Heart left ventricle (tissue), 16 donors: ENCODE measurements at regions of chr10 and their contacts with region 1.

Region 1: DNA sequence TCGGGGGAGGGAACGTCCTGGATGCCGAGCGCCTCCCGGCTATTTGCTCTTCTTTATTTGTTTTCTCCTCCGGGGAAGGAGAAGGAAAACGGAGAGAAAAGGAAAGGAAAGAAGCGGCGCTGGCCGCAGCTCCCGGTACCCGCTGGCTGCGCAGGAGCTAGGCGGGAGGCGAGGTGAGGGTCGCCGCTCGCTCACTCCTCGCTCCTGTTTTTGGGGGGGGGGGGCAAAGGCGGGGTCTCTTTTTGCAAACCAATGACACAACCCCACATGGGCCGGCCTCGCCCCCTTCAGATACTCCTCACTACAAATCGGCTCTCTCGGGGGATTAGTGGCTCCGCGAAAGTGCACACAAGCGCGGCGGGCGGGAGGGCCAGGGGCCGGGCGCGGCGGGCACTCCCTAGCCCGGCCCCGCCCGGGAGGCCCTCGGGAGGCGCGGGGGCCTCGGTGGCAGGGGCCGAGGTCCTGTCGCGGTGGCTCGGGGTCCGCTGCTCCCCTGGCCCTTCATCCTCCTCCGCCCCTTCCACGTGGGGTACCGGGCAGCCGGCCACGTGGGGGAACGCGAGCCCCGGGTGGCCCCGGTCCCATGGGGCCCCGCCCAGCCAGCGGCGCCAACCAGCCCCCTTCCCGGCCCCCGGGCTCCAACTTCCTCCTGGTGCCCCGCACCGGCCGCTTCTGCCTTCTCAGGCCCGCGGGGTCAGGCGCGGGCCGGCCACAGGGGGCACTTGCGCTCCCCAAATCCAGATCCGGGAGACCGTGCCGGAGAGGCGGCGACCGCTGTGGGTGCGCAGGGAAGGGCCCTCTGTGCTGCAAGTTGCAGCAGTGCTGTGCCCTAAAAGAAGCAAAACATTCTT is 718 bp upstream of the CTBP2 start:
- DNase-seq: peak; percentile 81 to 89 (median 83)
- ATAC-seq: peak; percentile 56 to 78 (median 74)
- H3K4me3 ChIP-seq: peak overlapping the region; percentile 72 to 98 (median 90)
- H3K27ac ChIP-seq: peak overlapping the region; percentile 89 to 99 (median 98)
- H3K4me1 ChIP-seq: peaks cover 3 to 35% (median 25%) of the 10 kb centered on the region in 12 donors
- H3K27me3 ChIP-seq: no peaks in the 10 kb centered on the region
- CTCF ChIP-seq: peak; percentile 28 to 65 (median 52)
- POLR2A ChIP-seq: peak in 1 of 2 donors; percentile 51

Region 2: DNA sequence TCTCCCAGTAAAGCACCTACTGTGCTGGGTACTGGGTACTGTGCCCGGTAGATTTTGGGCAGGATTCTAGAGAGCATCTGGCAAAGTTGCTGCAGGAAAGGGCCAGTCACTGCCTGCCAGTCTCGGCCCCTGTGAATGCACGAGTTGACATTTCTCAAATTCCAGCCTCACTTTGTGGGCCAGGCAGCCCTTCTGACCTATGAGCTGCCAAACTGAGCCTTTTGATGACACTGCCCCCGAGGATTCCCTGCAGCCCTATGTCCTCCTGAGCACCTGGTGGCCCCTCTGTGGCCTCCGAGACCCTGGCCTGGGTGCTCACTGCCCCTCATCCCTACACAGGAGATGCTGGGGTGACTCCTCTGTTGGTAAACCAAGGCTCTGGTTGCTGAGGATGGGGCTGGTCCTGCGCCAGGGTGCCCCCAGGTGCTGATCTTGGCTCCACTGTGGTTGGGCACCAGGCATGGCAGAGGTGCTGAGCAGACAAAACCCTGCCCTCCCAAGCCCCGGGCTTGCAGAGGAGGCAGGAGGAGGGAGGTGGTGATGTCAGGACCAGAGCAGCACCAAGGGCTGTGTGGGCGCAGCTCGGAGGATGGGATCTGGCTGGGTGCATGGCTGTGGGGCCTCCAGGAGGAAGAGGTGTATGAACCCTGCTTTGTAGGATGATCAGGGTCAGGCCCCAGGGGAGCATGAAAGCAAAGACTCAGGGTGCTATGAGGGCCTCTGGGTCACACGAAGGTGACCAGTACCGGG is 683.3 kb before region 1 on chr10:
- intact Hi-C with region 1: no loop called
- DNase-seq: no peak
- ATAC-seq: peak in 2 of 4 donors; percentile 16 to 49
- H3K4me3 ChIP-seq: no peak overlapping the region
- H3K27ac ChIP-seq: no peak overlapping the region
- H3K4me1 ChIP-seq: peaks cover 0 to 4% (median 0%) of the 10 kb centered on the region in 12 donors
- H3K27me3 ChIP-seq: no peaks in the 10 kb centered on the region
- CTCF ChIP-seq: no peak
- POLR2A ChIP-seq: no peak

Region 3: GRCh38 chr10:124992462-124993344 is 168.4 kb before region 1 on chr10:
- intact Hi-C with region 1: loop called in 4 of 10 experiments (anchors 5 to 10 kb)
- DNase-seq: peak in 4 of 5 donors; percentile 76 to 84 (median 82)
- ATAC-seq: peak; percentile 68 to 73 (median 71)
- H3K4me3 ChIP-seq: no peak overlapping the region
- H3K27ac ChIP-seq: peak overlapping the region in 4 of 12 donors; percentile 1 to 22 (median 14)
- H3K4me1 ChIP-seq: peaks cover 0 to 21% (median 5%) of the 10 kb centered on the region in 12 donors
- H3K27me3 ChIP-seq: no peaks in the 10 kb centered on the region
- CTCF ChIP-seq: peak; percentile 62 to 84 (median 81)
- POLR2A ChIP-seq: no peak

Region 4: GRCh38 chr10:125060826-125061556 is 100.1 kb before region 1 on chr10:
- intact Hi-C with region 1: loop called in 9 of 10 experiments (anchors 1 to 10 kb)
- DNase-seq: peak; percentile 84 to 91 (median 87)
- ATAC-seq: peak; percentile 39 to 71 (median 67)
- H3K4me3 ChIP-seq: peak overlapping the region in 8 of 12 donors; percentile 12 to 38 (median 25)
- H3K27ac ChIP-seq: peak overlapping the region; percentile 19 to 90 (median 70)
- H3K4me1 ChIP-seq: peaks cover 27 to 100% (median 98%) of the 10 kb centered on the region in 12 donors
- H3K27me3 ChIP-seq: no peaks in the 10 kb centered on the region
- CTCF ChIP-seq: peak; percentile 77 to 95 (median 88)
- POLR2A ChIP-seq: no peak

Region 5: GRCh38 chr10:125084191-125084613 is 76.9 kb before region 1 on chr10:
- intact Hi-C with region 1: loop called in 2 of 10 experiments (anchors 5 kb)
- DNase-seq: peak in 3 of 5 donors; percentile 49 to 84 (median 56)
- ATAC-seq: peak; percentile 40 to 86 (median 76)
- H3K4me3 ChIP-seq: peak overlapping the region in 2 of 12 donors; percentile 6 to 34
- H3K27ac ChIP-seq: peak overlapping the region; percentile 62 to 92 (median 82)
- H3K4me1 ChIP-seq: peaks cover 3 to 73% (median 45%) of the 10 kb centered on the region in 12 donors
- H3K27me3 ChIP-seq: no peaks in the 10 kb centered on the region
- CTCF ChIP-seq: peak in 4 of 12 donors; percentile 13 to 26 (median 21)
- POLR2A ChIP-seq: no peak

Region 6: DNA sequence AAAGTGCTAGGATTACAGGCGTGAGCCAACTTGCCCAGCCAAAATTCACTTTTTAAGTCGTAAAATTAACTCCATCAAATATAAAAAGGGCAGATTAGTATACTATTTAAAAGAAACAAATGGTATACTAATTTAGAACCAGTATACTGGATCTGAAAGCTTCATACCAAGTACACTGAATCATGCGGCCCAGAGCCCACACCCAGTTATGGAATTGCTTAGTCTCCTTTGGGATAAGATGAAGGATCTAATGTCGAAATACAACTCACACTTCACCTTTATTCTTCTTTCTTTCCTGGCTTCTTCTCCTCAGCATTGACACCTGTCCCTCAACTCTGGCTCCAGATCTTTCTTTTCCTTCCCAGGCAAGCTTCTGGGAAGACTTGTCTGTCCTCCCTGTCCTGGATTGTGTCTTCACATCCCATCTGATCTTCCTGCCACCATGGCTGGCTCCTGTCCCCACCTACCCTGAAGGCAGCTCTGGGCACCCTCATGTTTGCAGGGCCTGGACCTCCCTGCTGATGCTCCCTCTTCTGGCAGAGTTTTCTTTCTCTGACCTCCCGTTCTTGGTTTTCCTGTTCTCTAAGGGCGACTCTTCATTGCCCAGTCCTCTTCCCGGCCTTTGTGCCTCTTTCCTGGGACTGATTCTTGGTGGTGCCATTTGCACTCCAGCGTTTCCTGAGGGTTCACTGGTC is 57.1 kb after region 1 on chr10:
- intact Hi-C with region 1: no loop called
- DNase-seq: no peak
- ATAC-seq: no peak
- H3K4me3 ChIP-seq: no peak overlapping the region
- H3K27ac ChIP-seq: no peak overlapping the region
- H3K4me1 ChIP-seq: no peaks in the 10 kb centered on the region
- H3K27me3 ChIP-seq: peaks cover 0 to 7% (median 0%) of the 10 kb centered on the region in 9 donors
- CTCF ChIP-seq: no peak
- POLR2A ChIP-seq: no peak

Region 7: GRCh38 chr10:125337510-125337909 is 176.4 kb after region 1 on chr10:
- intact Hi-C with region 1: loop called in 9 of 10 experiments (anchors 5 to 10 kb)
- DNase-seq: no peak
- ATAC-seq: no peak
- H3K4me3 ChIP-seq: no peak overlapping the region
- H3K27ac ChIP-seq: no peak overlapping the region
- H3K4me1 ChIP-seq: peaks cover 0 to 12% (median 0%) of the 10 kb centered on the region in 12 donors
- H3K27me3 ChIP-seq: no peaks in the 10 kb centered on the region
- CTCF ChIP-seq: no peak
- POLR2A ChIP-seq: no peak

Region 8: DNA sequence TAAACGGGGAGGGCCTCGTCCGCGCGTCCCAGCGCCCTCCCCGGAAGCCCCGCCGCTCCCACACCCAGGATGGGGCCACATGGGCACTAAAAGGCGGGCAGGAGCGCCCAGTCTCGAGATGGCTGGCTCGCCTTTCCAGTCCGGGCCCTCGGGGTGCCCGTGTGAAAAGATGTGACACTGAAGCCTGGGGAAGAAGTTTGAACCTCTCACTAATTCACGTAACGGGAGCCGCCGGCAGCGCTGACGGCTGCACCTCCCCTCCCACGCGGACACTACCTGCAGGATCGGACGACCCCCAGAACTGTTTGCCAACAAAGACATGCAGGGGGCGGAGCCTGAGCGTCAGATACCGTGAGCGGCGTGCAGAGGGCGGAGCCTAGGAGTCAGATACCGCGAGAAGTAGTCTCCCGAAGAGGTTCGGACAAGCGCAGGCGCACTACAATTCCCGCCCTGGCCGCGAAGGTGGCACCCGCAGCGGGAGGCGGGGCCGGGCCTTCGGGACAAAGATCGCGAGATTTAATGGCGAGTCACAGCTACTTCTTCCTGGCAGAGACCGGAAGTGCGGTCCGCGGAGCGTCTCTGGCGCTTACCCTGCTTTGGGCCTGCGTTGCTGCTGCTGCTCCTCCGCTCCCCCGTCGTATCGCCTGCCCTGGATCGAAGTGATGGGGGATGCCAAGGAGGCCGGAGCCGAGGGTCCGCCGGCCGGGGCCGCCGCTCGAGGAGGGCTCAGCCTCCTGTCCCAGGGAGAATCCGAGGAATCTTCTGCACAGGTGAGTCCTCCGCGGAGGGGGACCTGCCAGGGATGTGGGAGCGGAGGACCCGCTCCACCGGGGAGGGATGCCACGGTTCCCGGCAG is 558.3 kb after region 1 on chr10 and contains the start of gene EDRF1:
- intact Hi-C with region 1: loop called in 3 of 10 experiments (anchors 5 to 10 kb)
- DNase-seq: peak; percentile 99 to 100 (median 99)
- ATAC-seq: peak; percentile 100
- H3K4me3 ChIP-seq: peak within 1 kb of the TSS; percentile 76 to 99 (median 95)
- H3K27ac ChIP-seq: peak within 1 kb of the TSS; percentile 54 to 93 (median 86)
- H3K4me1 ChIP-seq: peaks cover 3 to 24% (median 13%) of the 10 kb centered on the region in 12 donors
- H3K27me3 ChIP-seq: no peaks in the 10 kb centered on the region
- CTCF ChIP-seq: no peak
- POLR2A ChIP-seq: peak in 1 of 2 donors; percentile 89
- total RNA-seq, gene EDRF1: 6.9 to 13.9 (median 9.8) TPM